ENCODE measurements at regions of chr6 and their contacts with region 1.

Region 1: DNA sequence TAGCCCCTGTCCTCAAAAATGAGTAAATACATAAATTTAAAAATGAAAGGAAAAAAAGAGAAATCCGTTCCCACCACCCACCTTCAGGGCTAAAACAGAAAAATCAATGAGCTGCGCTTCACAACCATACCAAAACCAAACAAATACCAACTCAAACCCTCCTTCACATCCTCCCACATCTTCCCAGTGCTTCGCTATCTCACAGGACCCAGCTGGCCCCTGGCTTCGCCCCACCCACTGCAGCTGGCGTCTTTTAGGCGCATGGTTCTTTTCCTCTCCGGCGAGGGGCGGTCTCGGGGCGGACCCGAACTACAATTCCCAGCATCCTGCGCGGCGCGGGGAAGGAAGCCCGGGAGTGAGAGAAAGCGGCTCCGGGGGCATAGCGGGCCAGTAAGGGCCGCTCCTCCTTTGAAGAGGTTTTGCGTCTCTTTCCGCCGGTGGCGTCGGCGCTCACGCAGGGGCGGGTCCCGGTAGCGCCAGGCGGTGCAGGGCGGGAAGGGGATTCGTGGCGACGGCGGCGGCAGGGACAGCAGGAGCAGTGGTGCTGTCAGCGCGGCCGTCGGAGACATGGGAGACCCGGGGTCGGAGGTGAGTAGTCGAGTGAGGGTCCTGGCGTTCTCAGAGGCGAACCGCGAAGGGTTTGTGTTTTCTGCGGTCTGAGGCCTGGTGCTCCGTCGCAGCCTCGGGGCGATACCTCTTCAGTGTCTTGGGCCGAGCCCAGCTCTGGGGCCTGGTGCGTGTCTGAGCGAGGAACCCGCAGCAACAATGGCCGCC is at the start of gene ZNF451:
- DNase-seq: peak; percentile 99
- H3K4me3 ChIP-seq: peak within 1 kb of the TSS; percentile 53
- H3K27ac ChIP-seq: peak within 1 kb of the TSS; percentile 78
- H3K4me1 ChIP-seq: peaks cover 21% of the 10 kb centered on the region
- H3K27me3 ChIP-seq: no peaks in the 10 kb centered on the region
- CTCF ChIP-seq: no peak
- total RNA-seq, gene ZNF451: 72.2 and 72.7 TPM in 2 replicates

Region 2: DNA sequence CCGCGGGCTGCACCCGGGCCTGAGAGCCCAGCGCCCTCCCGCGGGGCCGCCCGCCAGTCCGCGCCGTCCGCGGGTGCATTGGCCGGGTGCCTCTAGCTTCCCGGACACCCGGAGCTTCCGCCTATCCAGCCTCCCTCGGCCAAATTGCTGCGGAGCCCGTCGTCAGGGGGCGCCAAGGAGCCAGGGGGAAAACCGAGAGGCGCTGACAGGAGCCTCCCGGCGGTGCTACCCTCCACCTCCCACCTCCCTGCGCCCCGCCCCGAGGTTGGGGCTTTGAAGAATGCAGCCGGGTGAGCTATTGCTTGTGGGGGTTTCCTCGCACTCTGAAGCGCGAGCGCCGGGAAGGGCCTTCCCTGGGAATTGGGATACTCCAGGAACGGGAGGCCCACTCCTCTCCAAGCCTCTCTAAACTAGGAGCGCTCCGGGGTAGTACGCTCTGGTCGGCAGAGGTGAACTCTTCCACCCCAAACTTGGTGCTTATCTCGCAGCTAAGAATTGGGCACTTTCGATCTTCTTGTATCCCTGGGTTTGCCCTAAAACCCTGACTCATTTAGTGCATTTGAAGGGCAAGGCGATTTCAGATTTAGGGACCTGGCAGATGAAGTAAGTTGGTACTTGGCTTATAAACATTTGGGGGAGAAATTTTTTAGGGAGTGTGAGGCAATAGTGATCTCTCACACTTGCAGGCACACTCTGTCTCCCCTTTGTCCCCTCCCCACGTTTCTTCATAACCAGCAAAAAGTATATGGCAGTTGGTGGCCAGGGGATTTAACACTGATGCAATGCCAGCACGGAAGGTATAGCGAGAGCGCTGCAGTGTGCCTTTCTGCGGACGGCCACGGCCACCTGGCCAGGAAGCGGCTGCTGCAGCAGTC is 134.5 kb before region 1 on chr6:
- CTCF ChIA-PET with region 1: no interaction called
- POLR2A ChIA-PET with region 1: no interaction called
- intact Hi-C with region 1: loop called (anchors 2 kb)
- DNase-seq: peak; percentile 92
- H3K4me3 ChIP-seq: peak overlapping the region; percentile 77
- H3K27ac ChIP-seq: peak overlapping the region; percentile 56
- H3K4me1 ChIP-seq: peaks cover 18% of the 10 kb centered on the region
- H3K27me3 ChIP-seq: no peaks in the 10 kb centered on the region
- CTCF ChIP-seq: peak; percentile 85

Region 3: DNA sequence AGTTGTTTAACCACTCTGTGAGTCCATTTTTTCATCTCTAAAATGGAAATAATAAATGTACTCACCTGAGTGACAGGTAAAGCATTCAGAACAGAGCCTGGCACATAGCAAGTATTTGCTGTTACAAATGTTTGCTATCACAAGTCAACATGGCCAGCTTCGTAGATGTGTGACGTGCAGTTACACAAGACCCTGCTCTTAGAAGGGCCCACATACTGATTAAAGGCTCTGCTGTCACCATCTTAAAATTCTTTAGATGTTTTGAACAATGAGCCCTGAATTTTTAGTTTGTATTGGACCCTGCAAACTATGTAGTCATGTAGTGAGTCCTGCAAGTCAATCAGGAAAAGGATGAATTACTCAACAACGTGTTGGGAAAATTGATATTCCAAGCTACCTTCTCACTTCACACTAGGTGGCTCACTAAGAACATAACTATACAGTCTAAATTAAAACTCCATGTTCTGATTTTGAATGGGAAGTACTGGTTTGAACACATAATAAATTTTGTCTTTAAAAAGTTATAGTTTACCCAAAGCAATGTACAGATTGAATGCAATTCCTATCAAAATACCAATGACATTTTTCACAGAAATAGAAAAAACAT is 83.6 kb before region 1 on chr6:
- CTCF ChIA-PET with region 1: no interaction called
- POLR2A ChIA-PET with region 1: no interaction called
- intact Hi-C with region 1: no loop called
- DNase-seq: no peak
- H3K4me3 ChIP-seq: no peak overlapping the region
- H3K27ac ChIP-seq: no peak overlapping the region
- H3K4me1 ChIP-seq: no peaks in the 10 kb centered on the region
- H3K27me3 ChIP-seq: no peaks in the 10 kb centered on the region
- CTCF ChIP-seq: no peak

Measured in A673 (cell line).